ENCODE measurements at regions of chr1 and their contacts with region 1.

Region 1: DNA sequence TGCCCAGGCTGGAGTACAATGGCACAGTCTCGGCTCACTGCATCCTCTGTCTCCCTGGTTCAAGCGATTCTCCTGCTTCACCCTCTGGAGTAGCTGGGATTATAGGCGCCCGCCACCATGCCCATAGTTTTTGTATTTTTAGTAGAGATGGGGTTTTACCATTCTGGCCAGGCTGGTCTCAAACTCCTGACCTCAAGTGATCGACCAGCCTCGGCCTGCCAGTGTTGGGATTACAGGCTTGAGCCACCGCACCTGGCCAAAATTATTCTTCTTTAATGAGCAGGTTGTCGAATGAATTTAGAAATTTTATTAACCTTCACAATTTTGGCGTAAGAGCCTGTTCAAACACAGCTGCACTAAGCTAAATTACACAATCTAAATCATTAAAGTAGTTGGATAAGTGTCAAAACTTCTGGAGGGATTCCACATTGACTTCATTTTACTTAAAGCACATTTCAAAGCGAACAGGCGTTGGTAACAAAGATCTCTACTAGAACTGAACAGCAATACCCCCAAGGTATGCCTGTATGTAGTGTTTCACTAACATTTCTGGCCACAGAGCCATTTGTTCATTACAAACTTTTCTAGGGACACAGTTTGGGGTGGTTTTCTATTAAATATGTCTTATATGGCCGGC is 5.2 kb upstream of the CTH start:
- DNase-seq: no peak
- H3K4me3 ChIP-seq: no peak overlapping the region
- H3K27ac ChIP-seq: no peak overlapping the region
- H3K4me1 ChIP-seq: no peaks in the 10 kb centered on the region
- H3K27me3 ChIP-seq: no peaks in the 10 kb centered on the region
- CTCF ChIP-seq: no peak
- POLR2A ChIP-seq: no peak

Region 2: DNA sequence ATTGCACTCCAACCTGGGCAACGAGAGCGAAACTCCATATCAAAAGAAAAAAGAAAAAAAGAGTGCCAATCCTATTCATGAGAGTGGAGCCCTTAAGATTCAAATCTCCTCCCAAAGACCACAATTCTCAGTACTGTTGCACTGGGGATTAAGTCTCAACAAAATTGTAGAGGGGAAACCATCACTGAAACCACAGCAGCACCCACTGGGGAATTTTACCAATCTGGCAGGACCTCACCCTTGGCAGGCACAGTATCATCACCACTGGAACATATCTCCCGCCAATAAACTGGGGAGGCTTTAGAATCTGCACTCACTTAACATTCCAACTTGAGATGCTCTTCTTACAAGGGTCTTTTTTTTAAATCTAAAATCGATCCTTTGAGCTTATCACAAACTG is 241.5 kb before region 1 on chr1:
- intact Hi-C with region 1: no loop called
- DNase-seq: no peak
- H3K4me3 ChIP-seq: no peak overlapping the region
- H3K27ac ChIP-seq: no peak overlapping the region
- H3K4me1 ChIP-seq: no peaks in the 10 kb centered on the region
- H3K27me3 ChIP-seq: no peaks in the 10 kb centered on the region
- CTCF ChIP-seq: no peak
- POLR2A ChIP-seq: no peak

Region 3: DNA sequence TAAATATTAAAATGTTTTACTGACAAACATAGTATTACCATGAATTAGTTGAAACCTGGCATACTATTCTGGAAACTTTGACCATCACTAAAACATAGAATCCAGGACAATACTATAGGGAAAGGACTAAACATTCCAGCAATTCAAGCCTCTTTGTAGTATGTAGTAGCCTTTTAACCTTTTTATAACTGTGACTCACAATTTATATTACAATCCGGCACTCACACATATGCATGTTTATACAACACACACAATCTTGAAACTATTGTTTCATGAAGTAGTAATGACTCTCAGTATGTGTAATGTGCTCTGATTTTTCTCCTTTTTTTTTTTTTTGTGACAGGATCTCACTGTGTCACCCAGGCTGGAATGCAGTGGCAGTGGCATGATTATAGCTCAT is 115.7 kb before region 1 on chr1:
- intact Hi-C with region 1: no loop called
- DNase-seq: no peak
- H3K4me3 ChIP-seq: no peak overlapping the region
- H3K27ac ChIP-seq: no peak overlapping the region
- H3K4me1 ChIP-seq: peaks cover 4% of the 10 kb centered on the region
- H3K27me3 ChIP-seq: no peaks in the 10 kb centered on the region
- CTCF ChIP-seq: no peak
- POLR2A ChIP-seq: no peak

Region 4: DNA sequence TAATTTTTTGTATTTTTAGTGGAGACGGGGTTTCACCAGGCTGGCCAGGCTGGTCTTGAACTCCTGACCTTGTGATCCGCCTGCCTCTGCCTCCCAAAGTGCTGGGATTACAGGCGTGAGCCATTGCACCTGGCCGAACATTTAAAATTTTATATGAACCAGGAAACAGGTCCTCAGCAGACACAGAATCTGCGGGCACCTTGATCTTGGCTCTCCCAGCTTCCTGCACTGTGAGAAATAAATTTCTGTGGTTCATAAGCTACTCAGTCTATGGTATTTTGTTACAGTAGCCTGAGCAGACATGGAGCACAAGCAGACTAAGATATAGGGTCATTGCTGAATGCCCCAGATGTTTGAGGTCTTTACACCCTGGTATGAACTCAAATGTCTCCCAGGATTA is 18.4 kb before region 1 on chr1:
- intact Hi-C with region 1: no loop called
- DNase-seq: no peak
- H3K4me3 ChIP-seq: no peak overlapping the region
- H3K27ac ChIP-seq: no peak overlapping the region
- H3K4me1 ChIP-seq: no peaks in the 10 kb centered on the region
- H3K27me3 ChIP-seq: no peaks in the 10 kb centered on the region
- CTCF ChIP-seq: no peak
- POLR2A ChIP-seq: no peak

Region 5: GRCh38 chr1:70688580-70688979 is 282.7 kb after region 1 on chr1:
- intact Hi-C with region 1: no loop called
- DNase-seq: no peak
- H3K4me3 ChIP-seq: no peak overlapping the region
- H3K27ac ChIP-seq: no peak overlapping the region
- H3K4me1 ChIP-seq: no peaks in the 10 kb centered on the region
- H3K27me3 ChIP-seq: no peaks in the 10 kb centered on the region
- CTCF ChIP-seq: no peak
- POLR2A ChIP-seq: no peak

Region 6: DNA sequence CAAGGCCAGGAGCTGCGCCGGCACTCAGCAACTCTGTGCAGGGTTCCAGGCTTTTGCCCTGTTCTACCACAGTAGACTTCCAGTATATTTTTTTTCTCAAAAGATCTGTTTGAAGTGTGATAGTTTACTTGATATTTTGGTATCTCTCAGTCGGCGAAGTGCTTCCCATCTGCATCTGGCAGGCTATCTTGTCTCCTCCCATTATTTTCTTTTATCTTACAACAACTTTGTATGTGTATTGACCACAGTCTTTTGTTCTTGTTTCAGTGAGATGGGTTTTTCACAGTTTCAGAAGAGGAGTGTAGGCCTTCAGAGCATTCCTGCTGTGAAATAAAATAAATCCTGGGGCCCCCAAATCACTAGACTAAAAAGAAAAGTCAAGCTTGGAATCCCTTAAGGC is 348.8 kb after region 1 on chr1:
- intact Hi-C with region 1: loop called (anchors 5 kb)
- DNase-seq: no peak
- H3K4me3 ChIP-seq: no peak overlapping the region
- H3K27ac ChIP-seq: no peak overlapping the region
- H3K4me1 ChIP-seq: no peaks in the 10 kb centered on the region
- H3K27me3 ChIP-seq: no peaks in the 10 kb centered on the region
- CTCF ChIP-seq: no peak
- POLR2A ChIP-seq: no peak

Measured in vagina (tissue), 2 donors.